Activated T-helper 1 cell treated with anti-CD3 and anti-CD28 coated beads, Interleukin-12 subunit alpha, Interleukin-12 subunit beta, Interleukin-2, Interleukin-4 antibody, amounts not matched to agents 30 ng/mL and 10 ng/mL and 1 ng/mL, durations not matched to agents 14 hours and 24 hours and 36 hours (primary cell): ENCODE measurements at regions of chr2 and their contacts with region 1.

Region 1: DNA sequence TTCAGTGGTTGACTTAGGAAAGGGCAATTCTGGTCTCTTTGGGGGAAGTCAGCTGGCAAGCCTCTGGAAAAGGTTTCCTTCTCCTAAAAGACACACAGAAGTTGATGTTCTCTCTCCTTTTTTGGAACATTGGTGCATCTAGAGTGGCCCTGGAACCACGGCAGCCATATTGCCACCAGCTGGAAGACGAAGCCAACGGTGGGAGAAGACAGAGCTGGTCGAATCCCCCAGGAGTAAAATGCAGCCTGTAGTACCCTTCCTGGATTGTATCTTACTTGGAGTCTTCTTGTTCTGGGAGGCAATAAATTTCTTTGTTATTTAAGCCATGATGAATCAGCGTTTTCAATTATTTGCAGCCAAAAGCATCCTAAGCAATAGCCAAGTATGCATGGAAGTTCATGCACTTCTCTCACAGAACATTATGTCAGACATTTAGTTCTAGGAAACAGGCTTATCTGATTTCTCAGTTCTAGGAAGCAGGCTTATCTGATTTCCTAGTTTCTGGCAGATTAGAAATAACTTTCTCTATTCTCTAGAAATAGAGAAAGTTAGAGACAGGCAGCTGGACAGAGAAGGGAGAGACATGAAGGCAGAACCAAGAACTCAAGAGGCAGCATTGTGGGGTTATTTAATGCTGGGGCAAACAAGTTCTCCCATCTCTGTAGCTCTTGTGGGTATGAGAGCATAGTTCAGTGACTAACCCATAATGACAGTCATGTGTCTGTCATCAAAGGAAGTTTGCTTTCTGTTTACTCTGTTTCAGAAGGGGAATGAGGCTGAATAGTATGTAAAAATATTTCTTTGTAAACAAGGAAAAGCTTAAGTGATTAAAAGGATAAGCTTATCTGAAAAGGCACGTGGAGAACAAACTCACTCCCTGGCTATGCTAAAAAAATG is 40.5 kb upstream of the NABP1 start:
- DNase-seq: no peak
- H3K4me3 Mint-ChIP-seq: peak overlapping the region; percentile 75
- H3K27ac Mint-ChIP-seq: peak overlapping the region; percentile 84
- H3K4me1 Mint-ChIP-seq: peaks cover 56% of the 10 kb centered on the region
- H3K27me3 Mint-ChIP-seq: peaks cover 1% of the 10 kb centered on the region

Region 2: DNA sequence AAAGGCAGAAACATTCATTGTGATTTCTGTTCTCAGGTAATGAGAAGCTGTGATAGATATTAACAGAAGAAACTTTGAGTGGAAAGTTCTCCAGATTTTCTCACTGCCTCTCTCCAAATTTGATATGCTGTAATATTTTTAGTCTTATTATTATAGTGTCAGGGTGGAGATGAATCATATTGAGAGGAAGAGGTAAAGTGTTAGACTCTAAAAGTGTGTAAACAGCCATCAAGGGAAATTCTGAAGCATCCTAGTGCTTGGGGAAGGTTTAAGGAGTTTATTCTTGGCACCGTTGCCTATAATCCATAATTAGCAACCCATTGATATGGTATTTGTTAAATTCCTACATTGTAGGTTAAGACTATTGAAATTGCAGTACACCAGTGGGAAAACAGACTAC is 64.2 kb before region 1 on chr2:
- intact Hi-C with region 1: loop called (anchors 1 kb)
- DNase-seq: no peak
- H3K4me3 Mint-ChIP-seq: peak overlapping the region; percentile 23
- H3K27ac Mint-ChIP-seq: peak overlapping the region; percentile 15
- H3K4me1 Mint-ChIP-seq: peaks cover 52% of the 10 kb centered on the region
- H3K27me3 Mint-ChIP-seq: peaks cover 24% of the 10 kb centered on the region

Region 3: DNA sequence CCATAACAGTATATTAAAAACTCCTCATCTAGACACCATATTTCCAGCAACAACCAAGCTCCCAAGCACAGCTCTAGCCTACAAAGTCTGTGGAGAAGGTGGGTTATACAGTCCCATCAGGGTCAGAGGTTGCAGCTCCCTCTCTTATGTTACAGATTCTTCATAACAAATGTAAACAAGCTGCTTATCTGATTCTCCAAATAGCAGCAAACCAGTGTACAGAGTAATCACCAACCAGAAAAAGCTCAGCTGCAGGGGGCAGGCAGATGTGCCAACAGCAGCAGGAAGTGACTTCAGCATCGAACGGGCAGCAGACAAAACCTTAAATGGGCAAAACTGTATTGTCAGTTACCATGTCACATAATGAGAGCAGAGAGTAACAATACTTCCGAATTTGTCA is 12.4 kb before region 1 on chr2:
- intact Hi-C with region 1: loop called (anchors 1 kb)
- DNase-seq: peak; percentile 34
- H3K4me3 Mint-ChIP-seq: peak overlapping the region; percentile 19
- H3K27ac Mint-ChIP-seq: peak overlapping the region; percentile 42
- H3K4me1 Mint-ChIP-seq: peaks cover 64% of the 10 kb centered on the region
- H3K27me3 Mint-ChIP-seq: no peaks in the 10 kb centered on the region

Region 4: DNA sequence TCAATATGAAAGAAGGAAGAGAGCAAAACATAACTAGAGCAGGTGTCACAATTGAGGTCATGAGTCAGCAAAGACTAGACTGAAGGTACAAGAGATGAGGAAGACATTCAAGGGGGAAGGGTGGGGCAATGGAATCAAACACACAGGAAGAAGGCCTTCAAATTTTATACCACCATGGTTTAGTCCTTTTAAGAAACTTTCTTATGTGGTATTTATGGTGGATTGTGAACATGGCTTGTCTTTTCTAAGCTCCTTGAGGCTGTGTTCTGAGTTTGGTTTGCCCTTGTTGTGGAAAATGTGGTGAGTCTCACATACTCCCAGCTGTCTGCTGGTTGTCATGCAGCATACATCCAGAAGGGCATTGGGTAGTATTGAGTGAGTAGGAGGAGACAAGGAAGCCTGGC is 102.6 kb after region 1 on chr2:
- intact Hi-C with region 1: loop called (anchors 1 kb)
- DNase-seq: peak; percentile 64
- H3K4me3 Mint-ChIP-seq: peak overlapping the region; percentile 2
- H3K27ac Mint-ChIP-seq: peak overlapping the region; percentile 45
- H3K4me1 Mint-ChIP-seq: peaks cover 18% of the 10 kb centered on the region
- H3K27me3 Mint-ChIP-seq: peaks cover 25% of the 10 kb centered on the region